ENCODE measurements at regions of chr16 and their contacts with region 1.

Region 1: GRCh38 chr16:68257906-68258800 is 6.2 kb upstream of the SLC7A6 start:
- DNase-seq: peak; percentile 95
- ATAC-seq: peak; percentile 89
- H3K4me3 ChIP-seq: peak overlapping the region in 1 of 3 experiments; percentile 47; a peak in 2 of 6 replicates
- H3K27ac ChIP-seq: peak overlapping the region; percentile 87
- H3K4me1 ChIP-seq: peaks cover 45% of the 10 kb centered on the region
- H3K27me3 ChIP-seq: no peaks in the 10 kb centered on the region
- CTCF ChIP-seq: peak; percentile 34; the same call in 1 of the 2 replicates
- EP300 ChIP-seq: peak; percentile 42 to 68; a peak in 3 of 4 replicates
- POLR2A ChIP-seq: peak; percentile 19 to 24; a peak in 1 of 4 replicates
- RAD21 ChIP-seq: no peak

Region 2: GRCh38 chr16:68237243-68238028 is 20.7 kb before region 1 on chr16:
- CTCF ChIA-PET with region 1: interaction called, 3 read pairs
- POLR2A ChIA-PET with region 1: interaction called, 92 read pairs
- in situ Hi-C with region 1: no loop called
- intact Hi-C with region 1: no loop called
- DNase-seq: peak; percentile 98
- ATAC-seq: peak; percentile 71
- H3K4me3 ChIP-seq: peak overlapping the region; percentile 66 to 94 (median 93)
- H3K27ac ChIP-seq: peak overlapping the region; percentile 85
- H3K4me1 ChIP-seq: peaks cover 38% of the 10 kb centered on the region
- H3K27me3 ChIP-seq: no peaks in the 10 kb centered on the region; a peak in 1 of 5 replicates
- CTCF ChIP-seq: peak; percentile 10; the same call in 1 of the 2 replicates
- EP300 ChIP-seq: peak; percentile 77 to 92
- POLR2A ChIP-seq: peak in 1 of 2 experiments; percentile 91; a peak in 2 of 4 replicates
- RAD21 ChIP-seq: peak; percentile 28; the same call in 1 of the 2 replicates

Region 3: GRCh38 chr16:68244903-68245853 is 13.0 kb before region 1 on chr16 and contains the start of gene PLA2G15:
- CTCF ChIA-PET with region 1: no interaction called
- POLR2A ChIA-PET with region 1: interaction called, 23 read pairs
- in situ Hi-C with region 1: no loop called
- intact Hi-C with region 1: no loop called
- DNase-seq: peak; percentile 87
- ATAC-seq: peak; percentile 90
- H3K4me3 ChIP-seq: peak within 1 kb of the TSS; percentile 85 to 97 (median 89)
- H3K27ac ChIP-seq: no peak within 1 kb of the TSS
- H3K4me1 ChIP-seq: peaks cover 59% of the 10 kb centered on the region
- H3K27me3 ChIP-seq: no peaks in the 10 kb centered on the region; a peak in 1 of 5 replicates
- CTCF ChIP-seq: peak; percentile 17; the same call in 1 of the 2 replicates
- EP300 ChIP-seq: 0 out of 4 replicates have a peak, but pooled peaks of 1 of the 2 experiments have one; percentile 23
- POLR2A ChIP-seq: peak in 1 of 2 experiments; percentile 59; a peak in 1 of 4 replicates
- RAD21 ChIP-seq: 0 out of 2 replicates have a peak, but pooled peaks have one; percentile 12
- total RNA-seq, gene PLA2G15: 9.9 and 14.4 TPM in 2 replicates

Region 4: GRCh38 chr16:68298907-68299561 is 40.9 kb after region 1 on chr16:
- CTCF ChIA-PET with region 1: interaction called, 3 read pairs
- POLR2A ChIA-PET with region 1: interaction called, 10 read pairs
- in situ Hi-C with region 1: no loop called
- intact Hi-C with region 1: no loop called
- DNase-seq: peak; percentile 77
- ATAC-seq: peak; percentile 51
- H3K4me3 ChIP-seq: no peak overlapping the region
- H3K27ac ChIP-seq: peak overlapping the region; percentile 28
- H3K4me1 ChIP-seq: peaks cover 37% of the 10 kb centered on the region
- H3K27me3 ChIP-seq: no peaks in the 10 kb centered on the region
- CTCF ChIP-seq: 0 out of 2 replicates have a peak, but pooled peaks have one; percentile 11
- EP300 ChIP-seq: no peak
- POLR2A ChIP-seq: peak; percentile 36 to 50; a peak in 1 of 4 replicates
- RAD21 ChIP-seq: no peak

Region 5: GRCh38 chr16:68328151-68328859 is 70.2 kb after region 1 on chr16:
- CTCF ChIA-PET with region 1: interaction called, 96 read pairs
- POLR2A ChIA-PET with region 1: interaction called, 24 read pairs
- in situ Hi-C with region 1: loop called (anchors 5 kb)
- intact Hi-C with region 1: loop called (anchors 1 kb)
- DNase-seq: peak; percentile 88
- ATAC-seq: peak; percentile 86
- H3K4me3 ChIP-seq: no peak overlapping the region; a peak in 1 of 6 replicates
- H3K27ac ChIP-seq: peak overlapping the region; percentile 50
- H3K4me1 ChIP-seq: peaks cover 54% of the 10 kb centered on the region
- H3K27me3 ChIP-seq: no peaks in the 10 kb centered on the region
- CTCF ChIP-seq: peak; percentile 96
- EP300 ChIP-seq: peak in 1 of 2 experiments; percentile 82; a peak in 2 of 4 replicates
- POLR2A ChIP-seq: no peak
- RAD21 ChIP-seq: peak; percentile 96